Prostate gland (tissue), 2 donors: ENCODE measurements at regions of chr5 and their contacts with region 1.

Region 1: GRCh38 chr5:16791036-16791705 is 144.9 kb downstream of the MYO10 start:
- DNase-seq: peak; percentile 51
- H3K4me3 ChIP-seq: no peak overlapping the region
- H3K27ac ChIP-seq: no peak overlapping the region
- H3K4me1 ChIP-seq: no peaks in the 10 kb centered on the region
- H3K27me3 ChIP-seq: no peaks in the 10 kb centered on the region
- CTCF ChIP-seq: peak; percentile 16 to 86 (median 78)
- POLR2A ChIP-seq: no peak

Region 2: GRCh38 chr5:16776611-16777251 is 14.4 kb before region 1 on chr5:
- intact Hi-C with region 1: no loop called
- DNase-seq: peak; percentile 89
- H3K4me3 ChIP-seq: no peak overlapping the region
- H3K27ac ChIP-seq: peak overlapping the region; percentile 7 to 16
- H3K4me1 ChIP-seq: no peaks in the 10 kb centered on the region
- H3K27me3 ChIP-seq: no peaks in the 10 kb centered on the region
- CTCF ChIP-seq: peak in 3 of 4 experiments; percentile 70 to 82 (median 77)
- POLR2A ChIP-seq: no peak

Region 3: DNA sequence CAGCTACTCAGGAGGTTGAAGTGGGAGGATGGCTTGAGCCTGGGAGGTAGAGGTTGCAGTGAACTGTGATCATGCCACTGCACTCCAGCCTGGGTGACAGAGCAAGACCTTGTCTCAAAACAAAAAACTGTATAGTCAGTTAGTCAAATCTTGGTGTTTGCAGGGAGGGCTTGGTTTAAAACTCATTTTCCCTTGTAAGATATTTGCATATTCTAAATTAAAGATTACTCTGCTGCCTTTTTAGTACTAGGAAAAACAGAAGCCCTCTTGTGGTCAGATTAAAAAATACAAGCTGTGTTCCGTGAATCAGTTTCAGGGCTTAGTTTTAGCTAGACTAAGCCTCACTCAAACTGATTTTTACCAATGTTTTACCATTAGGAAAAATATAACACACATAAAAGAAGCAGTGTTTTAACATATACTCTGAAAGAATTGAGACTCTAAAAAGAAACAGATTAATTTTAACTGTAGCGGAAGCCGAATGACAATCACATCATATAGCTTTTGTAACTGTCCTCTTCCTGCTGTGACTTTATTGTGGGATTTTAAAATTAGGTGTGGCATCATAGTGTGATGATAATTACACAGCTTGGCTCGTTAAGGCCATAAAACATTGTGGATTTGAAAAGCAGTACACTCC is 341.4 kb after region 1 on chr5:
- intact Hi-C with region 1: loop called (anchors 5 kb)
- DNase-seq: no peak
- H3K4me3 ChIP-seq: no peak overlapping the region
- H3K27ac ChIP-seq: no peak overlapping the region
- H3K4me1 ChIP-seq: no peaks in the 10 kb centered on the region
- H3K27me3 ChIP-seq: no peaks in the 10 kb centered on the region
- CTCF ChIP-seq: peak; percentile 47 to 72 (median 66)
- POLR2A ChIP-seq: no peak

Region 4: GRCh38 chr5:17189381-17190036 is 398.3 kb after region 1 on chr5:
- intact Hi-C with region 1: loop called (anchors 5 kb)
- DNase-seq: peak; percentile 65
- H3K4me3 ChIP-seq: no peak overlapping the region
- H3K27ac ChIP-seq: no peak overlapping the region
- H3K4me1 ChIP-seq: no peaks in the 10 kb centered on the region
- H3K27me3 ChIP-seq: no peaks in the 10 kb centered on the region
- CTCF ChIP-seq: peak; percentile 67 to 96 (median 78)
- POLR2A ChIP-seq: no peak